Left cardiac atrium (tissue), 4 donors: ENCODE measurements at regions of chr18 and their contacts with region 1.

Region 1: DNA sequence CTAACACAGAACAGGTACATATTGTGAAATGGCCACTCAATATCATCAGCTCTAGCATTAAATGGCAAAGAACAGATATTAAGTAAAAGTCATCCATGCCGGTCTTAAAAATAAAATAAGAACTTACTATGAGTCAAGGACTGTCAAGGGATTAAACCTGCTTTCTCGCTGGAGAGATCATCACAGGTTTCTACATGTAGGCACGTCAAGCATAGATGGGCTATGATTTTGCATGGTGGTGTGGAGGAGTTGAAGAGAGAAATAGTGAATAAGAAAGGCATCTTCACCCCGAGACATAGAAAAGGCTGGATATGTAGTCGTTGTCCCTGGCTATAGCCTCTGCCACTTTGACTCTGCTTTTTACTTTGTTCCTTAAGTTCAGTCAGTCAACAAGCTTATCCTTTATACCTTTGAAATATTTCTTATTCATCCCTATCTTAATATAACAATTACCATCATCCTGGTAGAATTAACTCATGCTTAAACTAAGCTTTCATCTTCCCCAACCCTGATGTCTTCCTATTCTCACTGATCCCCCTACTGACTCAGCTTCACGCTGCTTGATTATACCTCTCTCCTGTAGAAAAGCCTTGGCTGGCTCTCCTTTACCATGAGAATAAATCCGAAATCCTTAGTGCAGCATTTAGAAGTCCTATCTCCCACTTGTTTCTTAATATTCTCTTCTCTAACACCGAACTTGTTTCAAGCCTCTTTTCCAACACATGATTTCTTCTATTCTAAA is 42.5 kb downstream of the DSC3 start:
- DNase-seq: no peak
- ATAC-seq: no peak

Region 2: GRCh38 chr18:31512203-31512764 is 512.2 kb after region 1 on chr18:
- intact Hi-C with region 1: loop called in 1 of 2 experiments (anchors 10 kb)
- DNase-seq: no peak
- ATAC-seq: peak; percentile 50 to 91